Adrenal gland (tissue), 19 donors: ENCODE measurements at regions of chr17 and their contacts with region 1.

Region 1: GRCh38 chr17:76385892-76386721 is 1.7 kb downstream of the SPHK1 start:
- DNase-seq: peak; percentile 76 to 89 (median 78)
- H3K4me3 ChIP-seq: peak overlapping the region in 2 of 4 donors; percentile 11 to 69
- H3K27ac ChIP-seq: peak overlapping the region in 1 of 5 donors; percentile 17
- H3K4me1 ChIP-seq: peaks cover 26 to 35% of the 10 kb centered on the region in 2 donors
- H3K27me3 ChIP-seq: no peaks in the 10 kb centered on the region
- CTCF ChIP-seq: peak; percentile 71 to 87 (median 82)
- POLR2A ChIP-seq: no peak

Region 2: GRCh38 chr17:76353599-76354316 is 32.3 kb before region 1 on chr17 and contains the start of gene PRPSAP1:
- intact Hi-C with region 1: loop called in 1 of 2 experiments (anchors 5 kb)
- DNase-seq: peak; percentile 84 to 91 (median 87)
- H3K4me3 ChIP-seq: peak within 1 kb of the TSS; percentile 67 to 83 (median 77)
- H3K27ac ChIP-seq: peak within 1 kb of the TSS; percentile 38 to 87 (median 84)
- H3K4me1 ChIP-seq: peaks cover 0 to 27% of the 10 kb centered on the region in 2 donors
- H3K27me3 ChIP-seq: no peaks in the 10 kb centered on the region
- CTCF ChIP-seq: peak; percentile 32 to 57 (median 45)
- POLR2A ChIP-seq: peak; percentile 82 to 93
- total RNA-seq, gene PRPSAP1: 33.0 to 79.3 (median 46.2) TPM